Right ventricle myocardium superior (tissue), 1 donor: ENCODE measurements at regions of chr15 and their contacts with region 1.

Region 1: DNA sequence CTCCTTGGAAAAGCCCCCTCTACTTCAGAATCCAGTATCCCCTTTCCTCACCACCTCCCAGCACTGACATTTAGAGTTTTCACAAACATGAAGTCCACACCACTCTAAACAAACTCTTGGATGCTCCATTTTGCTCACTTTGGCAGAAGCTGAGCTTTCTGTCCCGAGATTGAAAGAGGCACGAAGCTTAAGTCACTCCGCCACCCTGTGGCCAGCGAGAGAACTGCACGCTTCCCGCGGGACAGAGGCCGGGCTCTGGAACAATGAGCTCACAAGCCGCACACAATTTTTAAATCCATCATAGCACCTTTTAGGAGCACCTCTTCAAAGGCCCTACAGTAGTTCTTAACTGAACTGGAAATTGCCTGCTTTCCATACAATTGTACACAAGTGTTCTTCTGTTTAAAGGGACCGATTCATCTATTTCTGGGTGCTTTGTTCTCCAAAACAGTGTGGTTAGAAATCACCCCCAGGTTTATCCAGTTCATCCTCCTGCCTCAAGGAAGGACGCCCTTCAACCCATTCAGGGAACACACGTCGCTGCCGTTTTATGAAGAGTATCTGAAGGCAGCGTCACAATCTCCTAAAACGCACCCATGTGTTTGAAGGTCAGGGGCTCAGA is 226.1 kb downstream of the VPS13C start:
- DNase-seq: peak; percentile 91
- ATAC-seq: peak; percentile 87

Region 2: DNA sequence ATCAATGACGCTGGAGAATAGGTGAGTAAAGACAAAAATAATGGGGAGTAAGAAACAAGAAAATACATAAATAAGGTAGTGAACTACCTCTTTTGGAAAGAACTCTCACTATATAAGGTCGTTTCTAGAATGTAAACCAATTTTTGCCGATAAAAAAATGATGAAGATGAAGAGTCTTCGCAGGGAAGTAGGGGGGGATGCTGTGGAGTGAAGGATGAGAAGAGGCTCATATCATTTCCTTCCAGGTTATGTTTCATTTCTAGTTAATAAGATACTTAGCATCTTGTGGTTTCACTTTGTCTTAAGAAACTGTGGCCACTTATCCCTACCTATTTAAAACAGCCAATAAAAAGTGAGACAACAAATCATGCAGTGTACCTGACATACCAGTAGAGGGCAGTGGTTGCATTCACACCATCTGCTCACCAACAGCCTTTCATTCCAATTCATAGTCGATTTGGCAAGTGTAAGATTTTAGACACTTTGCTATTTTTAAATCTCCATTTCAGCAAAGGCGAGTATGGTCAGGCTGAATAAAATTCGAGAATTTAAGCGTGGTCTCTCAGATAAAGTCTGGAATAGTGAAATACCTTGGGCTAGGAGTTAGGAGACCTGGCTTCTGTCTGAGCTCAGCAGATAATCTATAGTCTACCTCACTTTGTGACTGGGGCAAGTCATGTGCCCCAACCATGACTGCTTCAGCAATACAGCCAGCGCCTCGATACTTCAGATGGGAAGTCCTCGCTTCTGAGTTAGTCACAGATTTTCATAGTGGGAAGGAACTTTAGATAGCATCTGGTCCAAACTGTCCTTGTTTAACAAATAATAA is 1326.4 kb before region 1 on chr15:
- intact Hi-C with region 1: loop called (anchors 5 kb)
- DNase-seq: no peak
- ATAC-seq: peak; percentile 87

Region 3: GRCh38 chr15:60585743-60586708 is 1248.2 kb before region 1 on chr15:
- intact Hi-C with region 1: loop called (anchors 5 kb)
- DNase-seq: no peak
- ATAC-seq: peak; percentile 81

Region 4: GRCh38 chr15:61906961-61907752 is 73.0 kb after region 1 on chr15:
- intact Hi-C with region 1: no loop called
- DNase-seq: no peak
- ATAC-seq: no peak